Caco-2 (cell line): ENCODE measurements at regions of chr5 and their contacts with region 1.

Region 1: DNA sequence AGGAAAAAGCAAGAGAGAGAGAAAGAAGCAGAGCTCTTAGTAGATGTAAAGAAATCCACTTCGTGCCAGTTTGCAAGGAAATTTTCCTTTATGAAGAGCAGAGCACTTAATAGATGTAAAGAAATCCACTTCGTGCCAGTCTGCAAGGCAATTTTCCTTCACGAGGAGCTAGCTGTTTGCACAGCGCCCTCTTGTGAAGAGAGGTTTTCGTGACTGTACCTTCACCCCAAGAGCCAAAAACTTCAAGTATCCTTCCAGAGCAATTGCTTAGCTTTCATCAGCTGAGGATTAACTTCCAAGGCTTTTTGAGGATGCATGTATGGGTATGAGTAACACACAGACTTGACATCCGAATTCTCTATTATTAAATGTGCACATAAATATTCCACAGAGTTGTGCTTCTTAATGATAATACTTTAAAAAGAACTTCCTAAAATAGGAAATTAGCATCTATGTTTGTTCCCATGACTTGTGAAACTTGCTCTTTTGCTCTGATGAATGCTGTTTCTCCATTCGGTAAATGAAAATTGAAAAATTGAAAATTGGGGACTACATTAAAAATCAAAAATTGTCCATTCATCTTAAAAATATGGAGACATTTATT is 525.6 kb downstream of the PDE4D start:
- DNase-seq: peak; percentile 63
- H3K4me3 ChIP-seq: no peak overlapping the region
- H3K4me3 Mint-ChIP-seq: no peak overlapping the region
- H3K27ac Mint-ChIP-seq: no peak overlapping the region
- H3K4me1 ChIP-seq: no peaks in the 10 kb centered on the region
- H3K4me1 Mint-ChIP-seq: no peaks in the 10 kb centered on the region
- H3K27me3 ChIP-seq: no peaks in the 10 kb centered on the region
- H3K27me3 Mint-ChIP-seq: no peaks in the 10 kb centered on the region
- CTCF ChIP-seq: peak; percentile 67 to 87

Region 2: DNA sequence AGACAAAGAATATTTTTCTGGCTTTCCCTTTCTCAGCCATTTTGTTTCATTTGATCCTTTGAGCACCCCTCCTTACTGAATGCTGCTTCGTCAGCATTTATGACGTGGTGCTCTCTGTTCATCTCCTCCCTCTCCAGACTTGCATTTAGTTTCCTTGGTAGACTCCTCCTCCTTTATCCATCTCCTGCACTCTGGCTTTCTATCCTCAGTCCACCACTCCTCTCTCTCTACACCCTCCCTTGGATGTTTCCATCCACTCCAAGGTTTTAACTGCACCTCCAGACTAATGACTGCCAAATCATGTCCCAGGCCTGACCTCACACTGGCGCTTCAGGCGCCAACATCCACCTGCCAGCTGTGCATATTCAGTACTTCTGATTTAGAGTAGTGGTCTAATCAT is 539.6 kb before region 1 on chr5:
- CTCF ChIA-PET with region 1: no interaction called
- POLR2A ChIA-PET with region 1: no interaction called
- intact Hi-C with region 1: no loop called
- DNase-seq: no peak
- H3K4me3 ChIP-seq: no peak overlapping the region
- H3K4me3 Mint-ChIP-seq: no peak overlapping the region
- H3K27ac Mint-ChIP-seq: peak overlapping the region; percentile 58
- H3K4me1 ChIP-seq: no peaks in the 10 kb centered on the region
- H3K4me1 Mint-ChIP-seq: peaks cover 12% of the 10 kb centered on the region
- H3K27me3 ChIP-seq: no peaks in the 10 kb centered on the region
- H3K27me3 Mint-ChIP-seq: peaks cover 3% of the 10 kb centered on the region
- CTCF ChIP-seq: no peak

Region 3: GRCh38 chr5:59218424-59219045 is 149.4 kb before region 1 on chr5:
- CTCF ChIA-PET with region 1: interaction called, 10 read pairs
- POLR2A ChIA-PET with region 1: no interaction called
- intact Hi-C with region 1: loop called (anchors 2 kb)
- DNase-seq: no peak
- H3K4me3 ChIP-seq: no peak overlapping the region
- H3K4me3 Mint-ChIP-seq: no peak overlapping the region
- H3K27ac Mint-ChIP-seq: no peak overlapping the region
- H3K4me1 ChIP-seq: no peaks in the 10 kb centered on the region; the same call in 1 of the 2 replicates
- H3K4me1 Mint-ChIP-seq: peaks cover 10% of the 10 kb centered on the region
- H3K27me3 ChIP-seq: no peaks in the 10 kb centered on the region
- H3K27me3 Mint-ChIP-seq: no peaks in the 10 kb centered on the region
- CTCF ChIP-seq: peak; percentile 5 to 52

Region 4: DNA sequence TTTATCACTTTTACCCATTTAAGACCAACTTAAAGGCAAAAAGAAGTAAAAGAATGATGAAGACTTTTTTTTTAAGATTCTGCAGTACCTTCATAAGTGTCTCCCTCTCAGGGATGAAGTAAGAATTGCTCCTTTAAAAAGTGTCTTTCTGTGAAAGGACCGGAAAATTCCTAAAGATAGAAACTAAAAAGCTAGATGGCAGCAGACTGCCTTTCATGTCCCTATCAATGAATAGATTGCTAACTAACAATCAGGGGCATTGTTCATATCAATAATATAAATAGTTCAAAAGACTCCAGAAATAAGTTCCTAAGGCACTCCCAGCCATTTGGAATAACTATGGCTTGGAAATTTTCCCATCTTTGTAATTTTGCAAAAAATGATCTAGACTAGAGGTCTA is 32.3 kb before region 1 on chr5:
- CTCF ChIA-PET with region 1: no interaction called
- POLR2A ChIA-PET with region 1: no interaction called
- intact Hi-C with region 1: loop called (anchors 1 kb)
- DNase-seq: peak in 1 of 2 experiments; percentile 14
- H3K4me3 ChIP-seq: no peak overlapping the region
- H3K4me3 Mint-ChIP-seq: no peak overlapping the region
- H3K27ac Mint-ChIP-seq: no peak overlapping the region
- H3K4me1 ChIP-seq: no peaks in the 10 kb centered on the region
- H3K4me1 Mint-ChIP-seq: no peaks in the 10 kb centered on the region
- H3K27me3 ChIP-seq: no peaks in the 10 kb centered on the region; the same call in 1 of the 2 replicates
- H3K27me3 Mint-ChIP-seq: no peaks in the 10 kb centered on the region
- CTCF ChIP-seq: peak in 1 of 2 experiments; percentile 34

Region 5: DNA sequence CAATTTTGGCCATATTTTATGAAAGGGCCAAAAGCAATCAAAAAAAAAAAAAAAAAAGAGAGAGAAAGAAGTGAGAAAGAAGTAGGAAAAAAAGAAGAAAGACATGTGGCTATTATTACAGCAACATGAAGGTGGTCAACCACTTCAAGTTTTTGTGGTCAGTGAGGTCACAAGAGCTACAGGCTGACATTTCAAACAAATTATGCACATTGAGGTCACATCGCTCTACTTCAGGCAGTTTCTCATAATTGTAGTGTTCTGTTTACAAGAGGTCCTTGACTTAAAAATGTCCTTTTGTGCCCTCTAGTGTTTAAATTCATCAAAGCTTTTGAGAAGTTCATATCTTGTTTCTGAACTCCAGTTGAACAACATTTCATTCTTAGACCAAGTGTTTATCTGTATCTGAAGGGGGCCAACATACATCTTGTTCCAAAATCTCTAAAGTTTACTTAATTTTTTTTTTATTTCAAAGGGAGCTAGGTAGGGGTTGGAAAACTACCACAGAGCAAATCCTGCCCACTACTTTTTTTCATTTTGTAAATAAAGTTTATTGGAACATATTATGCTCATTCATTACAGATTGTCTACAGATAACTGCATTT is 12.6 kb after region 1 on chr5:
- CTCF ChIA-PET with region 1: interaction called, 12 read pairs
- POLR2A ChIA-PET with region 1: no interaction called
- intact Hi-C with region 1: no loop called
- DNase-seq: peak in 1 of 2 experiments; percentile 50
- H3K4me3 ChIP-seq: no peak overlapping the region
- H3K4me3 Mint-ChIP-seq: no peak overlapping the region
- H3K27ac Mint-ChIP-seq: no peak overlapping the region
- H3K4me1 ChIP-seq: peaks cover 7% of the 10 kb centered on the region; the same call in 1 of the 2 replicates
- H3K4me1 Mint-ChIP-seq: peaks cover under 1% of the 10 kb centered on the region
- H3K27me3 ChIP-seq: no peaks in the 10 kb centered on the region
- H3K27me3 Mint-ChIP-seq: no peaks in the 10 kb centered on the region
- CTCF ChIP-seq: peak; percentile 50 to 56

Region 6: GRCh38 chr5:59449905-59450644 is 82.2 kb after region 1 on chr5:
- CTCF ChIA-PET with region 1: no interaction called
- POLR2A ChIA-PET with region 1: no interaction called
- intact Hi-C with region 1: no loop called
- DNase-seq: no peak
- H3K4me3 ChIP-seq: no peak overlapping the region
- H3K4me3 Mint-ChIP-seq: no peak overlapping the region
- H3K27ac Mint-ChIP-seq: no peak overlapping the region
- H3K4me1 ChIP-seq: no peaks in the 10 kb centered on the region
- H3K4me1 Mint-ChIP-seq: no peaks in the 10 kb centered on the region
- H3K27me3 ChIP-seq: no peaks in the 10 kb centered on the region
- H3K27me3 Mint-ChIP-seq: no peaks in the 10 kb centered on the region
- CTCF ChIP-seq: no peak